ENCODE measurements at regions of chr19 and their contacts with region 1.

Region 1: DNA sequence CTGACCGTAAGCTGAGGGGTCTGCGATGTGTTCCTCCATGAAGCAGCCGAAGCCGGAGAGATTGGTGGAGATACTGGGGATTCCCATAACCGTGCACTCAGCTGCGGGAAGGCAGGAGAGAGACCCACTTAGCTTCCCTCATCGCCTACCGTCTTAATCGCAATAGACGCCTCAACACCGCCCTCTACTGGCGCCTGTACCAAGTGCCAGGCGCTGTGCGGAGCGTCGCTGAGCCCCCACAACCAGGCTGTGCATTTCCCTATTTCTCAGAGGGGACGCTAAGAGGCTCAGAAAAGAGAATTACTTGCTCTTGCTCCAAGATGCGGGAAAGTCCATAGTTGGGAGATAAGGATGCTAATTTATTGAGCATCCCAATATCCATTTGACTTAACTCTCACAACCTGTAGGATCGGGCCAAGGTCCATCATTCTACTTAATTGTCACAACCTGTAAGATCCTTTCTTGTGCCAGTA is 5.8 kb downstream of the FTL start:
- DNase-seq: no peak
- ATAC-seq: peak; percentile 86
- H3K4me3 ChIP-seq: peak overlapping the region; percentile 14 to 45
- H3K27ac ChIP-seq: no peak overlapping the region
- H3K4me1 ChIP-seq: peaks cover 13% of the 10 kb centered on the region; the same call in 1 of the 2 replicates
- H3K27me3 ChIP-seq: no peaks in the 10 kb centered on the region
- CTCF ChIP-seq: peak; percentile 91

Region 2: GRCh38 chr19:48780631-48781391 is 190.1 kb before region 1 on chr19:
- CTCF ChIA-PET with region 1: no interaction called
- POLR2A ChIA-PET with region 1: no interaction called
- in situ Hi-C with region 1: no loop called
- intact Hi-C with region 1: loop called (anchors 10 kb)
- DNase-seq: no peak
- ATAC-seq: 0 out of 2 replicates have a peak, but pooled peaks have one; percentile 19
- H3K4me3 ChIP-seq: no peak overlapping the region
- H3K27ac ChIP-seq: no peak overlapping the region
- H3K4me1 ChIP-seq: no peaks in the 10 kb centered on the region
- H3K27me3 ChIP-seq: no peaks in the 10 kb centered on the region
- CTCF ChIP-seq: no peak

Region 3: DNA sequence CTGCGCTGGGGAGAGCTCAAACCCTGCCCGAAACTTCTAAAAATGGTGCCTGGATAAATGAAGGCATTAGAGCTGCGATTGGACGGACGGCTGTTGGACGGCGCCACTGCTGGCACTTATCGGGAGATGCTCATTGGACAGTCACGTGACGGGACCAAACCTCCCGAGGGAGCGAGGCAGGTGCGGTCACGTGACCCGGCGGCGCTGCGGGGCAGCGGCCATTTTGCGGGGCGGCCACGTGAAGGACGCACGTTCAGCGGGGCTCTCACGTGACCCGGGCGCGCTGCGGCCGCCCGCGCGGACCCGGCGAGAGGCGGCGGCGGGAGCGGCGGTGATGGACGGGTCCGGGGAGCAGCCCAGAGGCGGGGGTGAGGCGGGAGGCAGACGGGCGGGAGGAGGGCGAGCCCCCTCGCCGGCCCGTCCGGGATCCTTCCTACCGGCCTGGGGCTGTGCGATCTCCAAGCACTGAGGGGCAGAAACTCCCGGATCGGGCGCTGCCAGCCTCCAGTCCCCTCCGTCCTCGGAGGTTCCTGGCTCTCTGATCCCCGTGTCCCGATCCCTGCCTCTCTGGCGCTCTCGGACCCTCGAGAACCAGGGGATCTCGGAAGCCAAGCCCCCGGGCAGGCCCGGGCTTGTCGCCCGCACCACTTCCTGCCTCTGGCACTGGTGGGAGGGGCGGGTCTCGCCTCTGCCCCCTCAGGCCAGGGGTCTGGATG is 16.2 kb before region 1 on chr19 and contains the start of gene BAX:
- CTCF ChIA-PET with region 1: no interaction called
- POLR2A ChIA-PET with region 1: interaction called, 20 read pairs
- in situ Hi-C with region 1: no loop called
- intact Hi-C with region 1: no loop called
- DNase-seq: peak; percentile 62
- ATAC-seq: peak; percentile 97
- H3K4me3 ChIP-seq: peak within 1 kb of the TSS; percentile 81 to 87
- H3K27ac ChIP-seq: peak within 1 kb of the TSS; percentile 83
- H3K4me1 ChIP-seq: peaks cover 4% of the 10 kb centered on the region; the same call in 1 of the 2 replicates
- H3K27me3 ChIP-seq: no peaks in the 10 kb centered on the region
- CTCF ChIP-seq: no peak
- total RNA-seq, gene BAX: 100 TPM

Region 4: GRCh38 chr19:48993175-48994034 is 22.4 kb after region 1 on chr19 and contains the starts of genes GYS1 and RUVBL2:
- CTCF ChIA-PET with region 1: interaction called, 11 read pairs
- POLR2A ChIA-PET with region 1: interaction called, 3 read pairs
- in situ Hi-C with region 1: no loop called
- intact Hi-C with region 1: no loop called
- DNase-seq: peak; percentile 82
- ATAC-seq: peak; percentile 97
- H3K4me3 ChIP-seq: peak within 1 kb of the TSS; percentile 79 to 96
- H3K27ac ChIP-seq: peak within 1 kb of the TSS; percentile 95
- H3K4me1 ChIP-seq: no peaks in the 10 kb centered on the region
- H3K27me3 ChIP-seq: no peaks in the 10 kb centered on the region
- CTCF ChIP-seq: peak; percentile 94
- total RNA-seq, gene GYS1: 20.2 TPM
- total RNA-seq, gene RUVBL2: 170 TPM

Region 5: GRCh38 chr19:49497047-49497788 is 526.3 kb after region 1 on chr19:
- CTCF ChIA-PET with region 1: no interaction called
- POLR2A ChIA-PET with region 1: no interaction called
- in situ Hi-C with region 1: no loop called
- intact Hi-C with region 1: no loop called
- DNase-seq: no peak
- ATAC-seq: no peak
- H3K4me3 ChIP-seq: peak overlapping the region; percentile 99 to 100
- H3K27ac ChIP-seq: peak overlapping the region; percentile 99
- H3K4me1 ChIP-seq: peaks cover 17% of the 10 kb centered on the region
- H3K27me3 ChIP-seq: no peaks in the 10 kb centered on the region
- CTCF ChIP-seq: no peak

Measured in Panc1 (cell line).